PC-3 (cell line): ENCODE measurements at regions of chr10 and their contacts with region 1.

Region 1: DNA sequence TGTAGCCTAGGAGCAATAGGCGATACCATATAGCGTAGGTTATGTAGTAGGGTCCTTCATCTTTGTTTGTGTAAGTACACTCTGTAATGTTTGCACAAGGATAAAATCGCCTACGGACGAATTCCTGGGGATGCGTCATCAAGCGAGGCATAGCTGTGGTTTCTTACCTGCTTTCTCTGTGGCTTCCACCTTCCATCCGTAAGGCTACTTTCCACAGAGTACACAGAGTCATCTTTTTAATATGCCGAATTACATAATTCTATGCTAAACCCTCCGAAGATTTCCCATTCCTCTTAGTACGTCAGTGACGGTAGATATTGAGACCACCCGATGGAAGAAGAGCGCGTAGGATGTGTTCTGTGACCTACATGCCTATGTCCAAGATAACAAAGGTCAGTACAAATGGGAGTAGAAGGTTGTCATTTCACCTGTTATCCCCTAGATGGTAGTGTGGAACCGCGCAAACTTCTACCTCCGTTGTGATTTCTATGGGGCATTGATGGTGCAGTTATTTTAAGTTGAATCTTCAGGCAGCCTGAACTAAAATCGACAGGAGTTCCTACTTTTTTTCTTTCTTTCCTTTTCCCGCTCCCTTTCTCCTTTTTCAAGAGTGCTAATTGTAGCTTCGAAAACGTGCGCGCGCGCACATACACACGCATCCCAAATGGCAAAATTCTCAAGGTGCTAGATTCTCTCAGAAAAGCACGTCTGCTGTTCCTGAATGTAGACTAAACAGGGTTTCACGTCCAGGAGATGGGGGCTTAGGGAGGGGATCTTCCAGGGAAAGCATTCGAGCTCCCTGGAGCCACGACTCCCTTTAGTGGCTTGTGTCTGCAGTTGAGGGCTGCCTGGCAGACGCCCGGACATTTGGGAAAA is 111.7 kb upstream of the MBL2 start:
- DNase-seq: peak; percentile 100
- ATAC-seq: peak; percentile 91
- H3K4me3 ChIP-seq: peak overlapping the region; percentile 52
- H3K27ac ChIP-seq: peak overlapping the region; percentile 52
- H3K4me1 ChIP-seq: peaks cover 25% of the 10 kb centered on the region
- H3K27me3 ChIP-seq: no peaks in the 10 kb centered on the region
- CTCF ChIP-seq: peak; percentile 100

Region 2: GRCh38 chr10:52801947-52802346 is 82.3 kb before region 1 on chr10:
- CTCF ChIA-PET with region 1: no interaction called
- POLR2A ChIA-PET with region 1: no interaction called
- intact Hi-C with region 1: loop called (anchors 1 kb)
- DNase-seq: peak; percentile 100
- ATAC-seq: peak; percentile 94
- H3K4me3 ChIP-seq: peak overlapping the region; percentile 19; the same call in 1 of the 2 replicates
- H3K27ac ChIP-seq: peak overlapping the region; percentile 67
- H3K4me1 ChIP-seq: peaks cover 19% of the 10 kb centered on the region
- H3K27me3 ChIP-seq: no peaks in the 10 kb centered on the region
- CTCF ChIP-seq: no peak

Region 3: GRCh38 chr10:52951824-52952223 is 67.6 kb after region 1 on chr10:
- CTCF ChIA-PET with region 1: interaction called, 8 read pairs
- POLR2A ChIA-PET with region 1: interaction called, 3 read pairs
- intact Hi-C with region 1: loop called (anchors 1 kb)
- DNase-seq: peak; percentile 97
- ATAC-seq: peak; percentile 44
- H3K4me3 ChIP-seq: no peak overlapping the region
- H3K27ac ChIP-seq: no peak overlapping the region
- H3K4me1 ChIP-seq: peaks cover 24% of the 10 kb centered on the region
- H3K27me3 ChIP-seq: no peaks in the 10 kb centered on the region
- CTCF ChIP-seq: peak; percentile 99

Region 4: DNA sequence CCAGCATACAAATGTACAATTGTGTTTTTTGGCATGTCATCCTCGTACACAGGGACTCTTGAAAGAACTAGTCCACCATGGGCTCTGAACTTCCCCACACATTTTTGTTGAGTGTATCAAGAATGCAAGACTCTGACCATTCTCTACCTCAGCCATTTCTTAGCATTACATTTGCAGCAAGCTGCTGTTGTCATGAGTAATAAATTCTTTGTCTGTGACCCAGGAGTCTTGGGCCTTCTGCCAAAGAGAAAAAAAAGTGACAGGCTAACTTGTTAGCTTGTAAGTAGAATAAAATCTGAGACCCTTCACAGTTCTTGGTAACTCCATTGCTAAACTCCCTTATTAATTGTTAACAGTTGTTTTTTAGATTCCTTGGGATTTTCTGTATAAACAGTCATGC is 430.6 kb after region 1 on chr10:
- CTCF ChIA-PET with region 1: interaction called, 4 read pairs
- POLR2A ChIA-PET with region 1: no interaction called
- intact Hi-C with region 1: loop called (anchors 1 kb)
- DNase-seq: peak; percentile 100
- ATAC-seq: peak; percentile 97
- H3K4me3 ChIP-seq: no peak overlapping the region
- H3K27ac ChIP-seq: no peak overlapping the region
- H3K4me1 ChIP-seq: peaks cover 14% of the 10 kb centered on the region
- H3K27me3 ChIP-seq: no peaks in the 10 kb centered on the region
- CTCF ChIP-seq: no peak

Region 5: GRCh38 chr10:53846809-53847208 is 962.6 kb after region 1 on chr10:
- CTCF ChIA-PET with region 1: no interaction called
- POLR2A ChIA-PET with region 1: no interaction called
- intact Hi-C with region 1: loop called (anchors 1 kb)
- DNase-seq: peak; percentile 37
- ATAC-seq: peak; percentile 73
- H3K4me3 ChIP-seq: no peak overlapping the region
- H3K27ac ChIP-seq: no peak overlapping the region
- H3K4me1 ChIP-seq: 0 out of 2 replicates have a peak, but pooled peaks cover 4% of the 10 kb centered on the region
- H3K27me3 ChIP-seq: no peaks in the 10 kb centered on the region
- CTCF ChIP-seq: peak; percentile 72

Region 6: GRCh38 chr10:54203401-54203800 is 1319.2 kb after region 1 on chr10:
- CTCF ChIA-PET with region 1: no interaction called
- POLR2A ChIA-PET with region 1: no interaction called
- intact Hi-C with region 1: loop called (anchors 10 kb)
- DNase-seq: peak; percentile 83
- ATAC-seq: peak; percentile 95
- H3K4me3 ChIP-seq: peak overlapping the region; percentile 27
- H3K27ac ChIP-seq: peak overlapping the region; percentile 70
- H3K4me1 ChIP-seq: peaks cover 20% of the 10 kb centered on the region
- H3K27me3 ChIP-seq: no peaks in the 10 kb centered on the region
- CTCF ChIP-seq: no peak